Activated B cell treated with CpG ODN at 0.5 μM for 24 hours (primary cell): ENCODE measurements at regions of chr3 and their contacts with region 1.

Region 1: DNA sequence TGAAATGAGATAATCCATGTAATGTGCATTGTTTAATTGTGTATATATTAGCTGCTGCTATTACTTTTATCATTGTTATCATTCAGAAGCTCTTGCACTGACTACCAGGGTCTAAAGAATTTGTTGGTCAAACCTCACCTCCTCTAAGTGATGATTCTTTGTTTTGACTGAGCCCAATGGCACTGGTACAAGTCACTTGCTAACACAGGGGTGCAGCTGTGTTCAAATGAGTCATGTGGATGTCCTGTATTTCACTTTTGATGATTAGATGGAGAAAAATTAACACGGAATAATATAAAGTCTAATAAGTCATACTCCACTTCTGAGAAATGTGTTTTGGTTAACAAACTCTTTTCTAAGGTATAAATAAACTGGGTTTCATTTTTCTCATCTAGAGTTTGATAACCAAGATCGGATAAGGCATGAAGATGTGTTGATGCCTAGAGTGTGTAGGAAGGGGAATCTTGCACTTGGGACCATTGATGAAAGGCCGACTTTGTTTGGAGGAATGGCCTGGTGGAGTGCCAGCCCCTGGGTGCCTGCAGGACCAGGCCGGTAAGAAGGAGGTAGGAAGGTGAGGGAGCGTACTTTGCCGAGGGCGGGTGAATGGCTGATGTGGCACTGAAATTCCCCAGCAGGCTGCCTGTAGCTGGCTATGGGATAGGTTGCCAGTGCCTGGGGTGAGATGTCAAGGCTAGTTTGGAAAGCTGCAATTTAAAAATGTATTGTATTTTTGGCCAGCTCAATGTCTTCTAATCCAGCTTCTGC is 244.7 kb upstream of the ZPLD1 start:
- DNase-seq: no peak
- ATAC-seq: no peak
- H3K4me3 Mint-ChIP-seq: no peak overlapping the region
- H3K27ac Mint-ChIP-seq: no peak overlapping the region
- H3K4me1 Mint-ChIP-seq: peaks cover 11% of the 10 kb centered on the region
- H3K27me3 Mint-ChIP-seq: no peaks in the 10 kb centered on the region
- CTCF ChIP-seq: no peak

Region 2: GRCh38 chr3:102174312-102174712 is 15.8 kb before region 1 on chr3:
- CTCF ChIA-PET with region 1: no interaction called
- POLR2A ChIA-PET with region 1: no interaction called
- intact Hi-C with region 1: loop called (anchors 2 kb)
- DNase-seq: no peak
- ATAC-seq: no peak
- H3K4me3 Mint-ChIP-seq: no peak overlapping the region
- H3K27ac Mint-ChIP-seq: no peak overlapping the region
- H3K4me1 Mint-ChIP-seq: peaks cover 6% of the 10 kb centered on the region
- H3K27me3 Mint-ChIP-seq: no peaks in the 10 kb centered on the region
- CTCF ChIP-seq: no peak

Region 3: DNA sequence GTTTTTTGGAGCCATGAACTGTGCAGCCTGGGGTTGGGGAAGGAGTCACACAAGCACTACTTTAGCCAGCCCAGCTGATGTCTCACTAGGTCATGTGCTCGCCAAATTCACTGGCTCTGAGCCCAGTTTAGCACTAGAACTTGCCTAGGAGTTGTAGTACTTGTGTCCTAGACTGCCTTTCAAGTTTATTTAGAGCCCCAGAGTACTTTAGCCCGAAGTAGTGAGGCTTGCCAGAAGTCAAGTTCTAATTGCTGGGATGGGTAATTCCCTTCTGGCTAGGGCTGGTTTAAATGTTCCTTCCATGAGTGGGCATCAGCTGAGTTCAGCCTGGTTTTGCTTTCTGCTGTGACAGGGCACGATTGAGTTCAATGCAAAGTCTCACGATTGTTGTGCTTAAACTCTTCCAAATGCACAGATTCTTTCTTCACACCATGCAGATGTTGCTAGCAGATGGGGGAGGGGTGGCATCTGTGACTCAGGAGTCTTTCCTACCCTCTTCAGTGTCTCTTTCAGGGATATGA is 16.4 kb after region 1 on chr3:
- CTCF ChIA-PET with region 1: no interaction called
- POLR2A ChIA-PET with region 1: no interaction called
- intact Hi-C with region 1: loop called (anchors 2 kb)
- DNase-seq: no peak
- ATAC-seq: no peak
- H3K4me3 Mint-ChIP-seq: no peak overlapping the region
- H3K27ac Mint-ChIP-seq: no peak overlapping the region
- H3K4me1 Mint-ChIP-seq: peaks cover 4% of the 10 kb centered on the region
- H3K27me3 Mint-ChIP-seq: no peaks in the 10 kb centered on the region
- CTCF ChIP-seq: no peak